Heart left ventricle (tissue), 16 donors: ENCODE measurements at regions of chr11 and their contacts with region 1.

Region 1: GRCh38 chr11:27571156-27571825 is 64.7 kb upstream of the LIN7C start:
- DNase-seq: no peak
- ATAC-seq: no peak
- H3K4me3 ChIP-seq: no peak overlapping the region
- H3K27ac ChIP-seq: no peak overlapping the region
- H3K4me1 ChIP-seq: peaks cover 0 to 11% (median 0%) of the 10 kb centered on the region in 12 donors
- H3K27me3 ChIP-seq: no peaks in the 10 kb centered on the region
- CTCF ChIP-seq: no peak
- POLR2A ChIP-seq: no peak

Region 2: DNA sequence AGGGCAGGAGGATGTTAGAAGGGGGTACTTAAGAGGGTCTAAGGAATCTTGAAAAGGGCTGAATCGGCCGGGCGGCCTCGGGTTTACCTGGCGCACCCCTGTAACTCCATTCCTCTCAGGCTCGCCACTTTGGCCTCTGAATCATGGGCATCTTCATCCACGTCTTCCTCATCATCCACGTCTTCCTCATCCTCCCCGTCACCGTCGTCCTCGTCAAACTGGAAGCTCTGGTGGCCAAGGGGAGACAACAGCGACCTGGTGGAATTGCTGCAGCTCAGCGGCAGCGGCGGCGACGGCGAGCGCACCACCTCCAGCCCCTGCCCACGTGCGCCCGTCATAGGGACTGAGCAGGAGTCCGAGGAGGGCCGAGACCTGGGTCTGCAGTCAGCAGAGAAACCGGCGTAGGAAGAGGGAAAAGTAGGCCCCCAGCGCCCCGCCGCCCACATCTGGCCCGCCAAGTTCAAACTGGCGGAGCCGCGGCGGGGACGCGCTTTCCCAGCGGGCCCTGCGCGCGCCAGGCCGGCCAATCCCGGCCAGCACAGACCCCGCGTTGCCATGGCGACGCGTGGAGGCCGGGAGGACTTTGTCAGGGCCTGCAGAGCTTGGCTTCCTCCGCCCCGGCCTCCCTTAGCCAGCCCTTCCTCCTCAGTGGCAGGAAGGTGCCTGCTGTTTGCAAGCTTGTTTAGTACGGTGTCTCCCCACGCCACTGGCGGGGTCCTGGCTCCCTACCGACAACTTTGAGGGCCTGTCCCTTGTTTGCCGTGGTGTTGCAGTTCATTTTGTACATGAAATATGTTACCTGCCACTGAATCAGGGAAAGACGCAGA is 208.3 kb before region 1 on chr11 and contains the start of gene CCDC34:
- intact Hi-C with region 1: no loop called
- DNase-seq: peak; percentile 90 to 96 (median 94)
- ATAC-seq: peak; percentile 99 to 100 (median 100)
- H3K4me3 ChIP-seq: peak within 1 kb of the TSS; percentile 37 to 89 (median 76)
- H3K27ac ChIP-seq: peak within 1 kb of the TSS in 8 of 12 donors; percentile 3 to 56 (median 40)
- H3K4me1 ChIP-seq: peaks cover 0 to 18% (median 10%) of the 10 kb centered on the region in 12 donors
- H3K27me3 ChIP-seq: no peaks in the 10 kb centered on the region
- CTCF ChIP-seq: no peak
- POLR2A ChIP-seq: no peak
- total RNA-seq, gene CCDC34: 1.1 to 8.3 (median 3.2) TPM

Region 3: DNA sequence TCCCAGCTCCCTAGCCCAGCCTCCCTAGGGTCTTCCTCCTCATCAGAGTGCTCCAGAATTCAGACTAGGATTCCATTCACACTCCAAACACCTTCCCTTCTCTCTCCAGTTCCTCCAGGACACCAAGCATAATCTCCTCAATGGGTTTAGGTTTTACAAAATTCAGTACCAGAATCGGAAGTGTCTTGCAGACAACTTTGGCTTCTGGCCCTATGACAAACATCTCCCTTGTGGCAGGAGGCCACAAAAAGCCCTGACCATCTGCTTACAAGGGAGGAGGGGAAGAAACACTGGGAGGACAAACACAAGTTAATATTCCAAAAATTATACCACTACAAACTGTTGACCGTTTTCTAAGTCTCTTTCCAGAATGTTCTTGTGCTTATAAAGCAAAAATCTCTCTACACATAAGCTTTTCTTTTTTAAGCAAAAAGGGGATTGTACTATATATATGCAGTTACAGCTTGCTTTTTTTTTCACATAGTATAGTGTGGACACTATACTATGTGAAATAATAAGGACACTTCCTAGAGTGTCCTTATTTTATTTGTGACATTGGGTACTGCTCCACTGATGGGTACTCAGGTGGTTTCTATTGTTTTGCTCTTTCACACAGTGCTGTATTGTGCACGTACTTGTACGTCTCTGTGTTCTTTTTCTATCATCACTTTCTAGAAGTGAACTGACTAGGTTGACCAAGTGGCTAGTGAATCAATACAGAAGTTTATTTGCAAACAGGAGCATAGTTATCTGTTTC is 50.3 kb after region 1 on chr11:
- intact Hi-C with region 1: loop called in 1 of 10 experiments (anchors 1 kb)
- DNase-seq: peak in 2 of 5 donors; percentile 18 to 26
- ATAC-seq: peak in 1 of 4 donors; percentile 42
- H3K4me3 ChIP-seq: no peak overlapping the region
- H3K27ac ChIP-seq: no peak overlapping the region
- H3K4me1 ChIP-seq: peaks cover 0 to 27% (median 14%) of the 10 kb centered on the region in 12 donors
- H3K27me3 ChIP-seq: no peaks in the 10 kb centered on the region
- CTCF ChIP-seq: no peak
- POLR2A ChIP-seq: no peak